ENCODE measurements at regions of chr3 and their contacts with region 1.

Region 1: DNA sequence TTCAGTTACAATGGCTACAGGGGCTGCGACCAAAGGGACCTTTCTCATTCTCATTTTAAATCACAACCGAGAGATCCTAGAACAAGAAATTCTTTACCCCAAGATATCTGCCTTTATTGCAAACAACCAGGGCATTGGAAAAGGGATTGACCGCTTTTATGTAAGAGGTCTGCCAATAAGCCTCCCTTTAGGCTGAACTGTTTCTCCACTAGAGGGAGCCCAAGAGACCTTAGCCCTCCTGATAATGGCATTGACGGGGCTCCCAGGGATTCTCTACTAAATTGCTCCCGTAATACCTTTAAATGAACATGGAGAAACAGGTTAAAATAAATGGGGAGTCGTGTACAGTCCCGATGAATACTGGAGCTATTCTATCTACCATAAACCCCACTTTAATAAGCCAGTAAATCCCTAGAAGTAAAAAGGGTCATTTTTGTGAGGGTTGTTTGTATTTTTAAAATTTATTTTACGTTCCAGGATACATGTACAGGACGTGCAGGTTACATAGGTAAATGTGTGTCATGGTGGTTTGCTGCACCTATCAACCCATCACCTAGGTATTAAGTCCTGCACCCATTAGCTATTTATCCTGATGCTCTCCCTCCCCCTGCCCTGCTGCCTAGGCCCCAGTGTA is 7.5 kb upstream of the IGSF10 start:
- DNase-seq: peak; percentile 78
- H3K4me3 Mint-ChIP-seq: no peak overlapping the region
- H3K27ac Mint-ChIP-seq: no peak overlapping the region
- H3K4me1 Mint-ChIP-seq: no peaks in the 10 kb centered on the region
- H3K27me3 Mint-ChIP-seq: peaks cover 15% of the 10 kb centered on the region
- CTCF ChIP-seq: peak; percentile 77

Region 2: DNA sequence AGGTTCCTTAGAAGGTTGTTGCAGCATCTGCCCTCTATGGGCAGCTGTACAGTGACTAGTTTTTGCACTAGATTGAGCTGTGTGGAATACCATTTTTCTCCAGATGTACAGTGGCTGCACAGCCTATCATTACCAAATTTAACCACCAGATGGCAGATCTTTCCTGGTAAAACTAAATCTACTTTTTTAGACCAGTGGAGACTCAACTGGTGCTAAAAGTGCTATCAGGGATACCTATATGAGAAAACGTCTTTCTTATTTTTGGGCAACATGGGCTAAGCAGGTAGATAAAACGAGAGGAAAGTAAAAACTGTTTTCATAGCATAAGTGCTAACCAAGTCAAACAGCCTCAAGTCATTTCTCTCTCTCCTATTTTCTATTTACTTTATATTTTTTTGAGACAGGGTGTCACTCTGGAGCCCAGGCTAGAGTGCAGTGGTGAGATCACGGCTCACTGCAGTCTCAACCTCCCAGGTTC is 28.7 kb before region 1 on chr3:
- CTCF ChIA-PET with region 1: interaction called, 46 read pairs
- POLR2A ChIA-PET with region 1: no interaction called
- intact Hi-C with region 1: no loop called
- DNase-seq: peak; percentile 67
- H3K4me3 Mint-ChIP-seq: no peak overlapping the region
- H3K27ac Mint-ChIP-seq: no peak overlapping the region
- H3K4me1 Mint-ChIP-seq: no peaks in the 10 kb centered on the region
- H3K27me3 Mint-ChIP-seq: no peaks in the 10 kb centered on the region
- CTCF ChIP-seq: peak; percentile 42

Region 3: DNA sequence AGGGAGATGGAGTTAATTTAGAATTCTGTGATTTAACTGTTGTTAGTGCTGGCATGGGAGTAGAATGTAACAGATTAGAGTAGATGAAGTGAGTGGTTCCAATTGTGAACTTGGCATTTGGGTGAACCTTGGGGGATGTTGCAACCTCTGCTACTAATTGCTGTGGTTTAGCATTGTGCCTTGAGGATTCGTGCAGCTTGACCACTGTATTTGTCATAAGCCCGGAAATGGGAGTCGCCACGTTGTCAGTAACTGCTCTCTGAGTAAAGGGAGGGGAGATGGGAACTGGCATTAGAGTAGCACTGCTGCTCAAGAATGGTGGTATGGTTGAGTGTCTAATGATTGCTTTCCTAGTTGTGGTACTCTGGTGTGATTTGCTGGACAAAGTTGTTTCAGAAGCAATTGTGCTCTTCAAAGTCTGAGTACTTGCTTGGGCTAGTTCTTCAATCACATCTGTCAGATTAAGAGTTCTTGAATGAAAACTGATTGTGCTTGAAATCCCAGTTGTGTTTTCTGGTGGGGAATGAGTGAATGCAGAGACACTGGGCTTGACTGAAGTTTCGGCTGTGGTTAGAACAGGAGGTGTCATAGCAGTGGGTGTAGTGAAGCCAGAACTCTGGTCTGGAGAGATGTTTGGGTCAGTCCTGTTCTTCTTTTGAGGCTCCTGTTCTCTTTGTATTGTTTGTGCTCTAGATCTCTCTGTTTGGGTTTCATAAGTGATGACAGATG is 23.0 kb before region 1 on chr3:
- CTCF ChIA-PET with region 1: interaction called, 46 read pairs
- POLR2A ChIA-PET with region 1: no interaction called
- intact Hi-C with region 1: no loop called
- DNase-seq: peak; percentile 86
- H3K4me3 Mint-ChIP-seq: no peak overlapping the region
- H3K27ac Mint-ChIP-seq: no peak overlapping the region
- H3K4me1 Mint-ChIP-seq: peaks cover 12% of the 10 kb centered on the region
- H3K27me3 Mint-ChIP-seq: peaks cover 20% of the 10 kb centered on the region
- CTCF ChIP-seq: no peak

Region 4: DNA sequence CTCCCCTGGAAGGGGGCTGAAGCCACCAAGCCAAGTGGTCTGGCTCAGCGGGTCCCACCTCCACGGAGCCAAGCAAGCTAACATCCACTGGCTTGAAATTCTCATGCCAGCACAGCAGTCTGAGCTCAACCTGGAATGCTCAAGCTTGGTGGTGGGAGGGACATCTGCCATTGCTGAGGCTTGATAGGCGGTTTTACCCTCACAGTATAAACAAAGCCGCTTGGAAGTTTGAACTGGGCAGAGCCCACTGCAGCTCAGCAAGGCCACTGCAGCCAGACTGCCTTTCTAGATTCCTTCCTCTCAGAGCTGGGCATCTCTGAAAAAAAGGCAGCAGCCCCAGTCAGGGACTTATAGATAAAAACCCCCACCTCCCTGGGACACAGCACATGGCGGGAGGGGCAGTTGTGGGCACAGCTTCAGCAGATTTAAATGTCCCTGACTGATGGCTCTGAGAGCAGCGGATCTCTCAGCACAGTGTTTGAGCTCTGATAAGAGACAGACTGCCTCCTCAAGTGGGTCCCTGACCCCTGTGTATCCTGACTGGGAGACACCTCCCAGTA is 15.6 kb after region 1 on chr3:
- CTCF ChIA-PET with region 1: interaction called, 44 read pairs
- POLR2A ChIA-PET with region 1: no interaction called
- intact Hi-C with region 1: no loop called
- DNase-seq: no peak
- H3K4me3 Mint-ChIP-seq: no peak overlapping the region
- H3K27ac Mint-ChIP-seq: no peak overlapping the region
- H3K4me1 Mint-ChIP-seq: no peaks in the 10 kb centered on the region
- H3K27me3 Mint-ChIP-seq: no peaks in the 10 kb centered on the region
- CTCF ChIP-seq: no peak

Region 5: DNA sequence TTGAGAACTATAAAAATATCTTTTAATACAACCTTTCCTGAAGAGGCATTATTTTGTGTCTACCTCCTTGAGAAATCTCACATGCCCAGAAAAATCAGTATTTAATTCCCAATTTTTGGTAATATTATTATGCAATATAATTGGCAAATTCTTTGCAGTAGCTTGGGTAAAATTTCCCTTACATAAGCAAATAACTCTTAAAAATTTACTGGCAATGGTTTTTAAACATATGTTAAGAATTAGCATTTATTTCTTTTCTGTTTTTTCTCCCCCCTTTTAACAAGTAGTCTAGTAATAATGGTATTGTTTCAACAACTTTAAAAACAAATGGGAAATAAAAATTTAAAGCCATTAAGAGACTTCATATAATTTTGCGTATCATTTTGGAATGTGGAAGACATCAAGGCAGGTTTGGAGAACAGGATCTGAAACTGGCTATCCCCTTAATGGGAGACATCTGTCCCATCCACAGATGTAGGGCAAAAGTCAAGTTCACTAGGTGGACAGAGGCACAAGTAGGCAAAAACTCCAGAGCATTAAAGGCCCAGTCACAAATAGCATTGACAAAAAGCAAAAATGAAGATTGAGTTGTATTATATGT is 175.7 kb after region 1 on chr3:
- CTCF ChIA-PET with region 1: no interaction called
- POLR2A ChIA-PET with region 1: no interaction called
- intact Hi-C with region 1: loop called (anchors 5 kb)
- DNase-seq: no peak
- H3K4me3 Mint-ChIP-seq: no peak overlapping the region
- H3K27ac Mint-ChIP-seq: no peak overlapping the region
- H3K4me1 Mint-ChIP-seq: peaks cover under 1% of the 10 kb centered on the region
- H3K27me3 Mint-ChIP-seq: no peaks in the 10 kb centered on the region
- CTCF ChIP-seq: no peak

Region 6: DNA sequence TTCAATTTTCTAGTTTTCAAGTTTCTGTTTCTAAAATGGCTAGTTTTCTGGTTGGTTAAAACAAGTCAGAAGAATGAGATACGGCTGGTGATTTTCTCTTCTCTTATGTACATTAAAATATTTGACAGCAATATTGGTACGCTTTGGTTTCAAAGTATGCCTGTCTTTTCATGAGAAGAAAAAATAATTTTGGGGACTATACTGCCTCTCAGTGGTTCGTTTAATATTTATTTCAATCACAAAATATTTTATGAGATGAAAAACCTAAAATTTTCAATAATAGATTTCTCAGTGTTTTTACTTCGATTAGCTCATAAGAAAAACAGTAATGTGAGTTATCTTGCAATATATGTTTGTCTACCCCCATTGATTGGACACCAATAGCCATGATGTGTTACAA is 192.5 kb after region 1 on chr3:
- CTCF ChIA-PET with region 1: interaction called, 25 read pairs
- POLR2A ChIA-PET with region 1: no interaction called
- intact Hi-C with region 1: no loop called
- DNase-seq: peak; percentile 13
- H3K4me3 Mint-ChIP-seq: no peak overlapping the region
- H3K27ac Mint-ChIP-seq: no peak overlapping the region
- H3K4me1 Mint-ChIP-seq: no peaks in the 10 kb centered on the region
- H3K27me3 Mint-ChIP-seq: no peaks in the 10 kb centered on the region
- CTCF ChIP-seq: peak; percentile 7

Region 7: GRCh38 chr3:151918253-151919029 is 450.0 kb after region 1 on chr3:
- CTCF ChIA-PET with region 1: interaction called, 9 read pairs
- POLR2A ChIA-PET with region 1: no interaction called
- intact Hi-C with region 1: loop called (anchors 1 kb)
- DNase-seq: peak; percentile 50
- H3K4me3 Mint-ChIP-seq: no peak overlapping the region
- H3K27ac Mint-ChIP-seq: no peak overlapping the region
- H3K4me1 Mint-ChIP-seq: no peaks in the 10 kb centered on the region
- H3K27me3 Mint-ChIP-seq: no peaks in the 10 kb centered on the region
- CTCF ChIP-seq: peak; percentile 70